ENCODE measurements at regions of chr1 and their contacts with region 1.

Region 1: GRCh38 chr1:24744911-24745710 is at the start of gene CLIC4:
- DNase-seq: peak; percentile 100
- ATAC-seq: peak; percentile 97
- H3K4me3 ChIP-seq: peak within 1 kb of the TSS; percentile 82 to 98
- H3K27ac ChIP-seq: peak within 1 kb of the TSS; percentile 81 to 97
- H3K4me1 ChIP-seq: peaks cover 0 to 3% of the 10 kb centered on the region in 2 donors
- H3K27me3 ChIP-seq: no peaks in the 10 kb centered on the region
- total RNA-seq, gene CLIC4: 477 to 941 TPM

Region 2: DNA sequence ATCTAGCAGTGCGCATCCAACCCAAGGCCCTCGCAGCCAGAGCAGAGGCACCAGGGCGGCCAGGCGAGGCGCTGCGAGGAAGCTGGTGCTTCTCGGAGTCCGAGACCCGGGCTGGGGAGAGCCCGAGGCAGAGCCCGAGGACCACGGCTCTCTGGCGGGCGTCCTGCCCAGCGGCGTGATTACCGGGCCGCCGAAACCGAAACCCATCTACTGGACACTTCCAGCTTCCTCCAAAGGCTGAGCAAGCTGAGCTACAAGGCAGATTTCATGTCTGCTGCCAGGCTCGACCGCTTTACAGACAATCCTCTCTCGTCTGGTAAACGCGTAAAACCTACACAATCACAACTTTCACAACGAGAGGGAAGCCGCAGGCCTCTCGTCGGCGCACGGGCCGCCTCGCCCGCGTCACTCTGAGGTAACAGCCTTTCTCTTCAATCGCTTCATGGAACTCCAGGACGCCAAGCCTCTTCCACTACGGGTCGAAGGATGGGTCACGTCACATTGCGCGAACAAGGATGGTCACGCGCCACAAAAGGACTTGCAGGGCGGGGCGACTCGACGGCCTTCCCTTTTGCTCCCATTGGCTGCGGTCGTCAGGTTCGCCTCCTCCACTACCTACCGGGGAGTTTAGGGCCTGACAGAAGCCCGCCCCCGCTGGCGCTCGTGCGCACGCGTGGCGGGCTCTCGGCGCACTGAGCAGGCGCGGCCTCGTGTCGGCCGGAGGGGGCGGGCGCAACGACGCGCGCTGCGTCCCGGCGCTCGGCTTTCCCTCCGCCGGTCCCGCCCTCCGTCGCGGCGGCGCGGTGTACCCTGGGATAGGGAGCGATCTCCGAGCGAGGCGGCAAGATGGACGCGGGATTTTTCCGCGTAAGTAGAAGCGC is 102.4 kb before region 1 on chr1 and contains the start of gene SRRM1:
- intact Hi-C with region 1: loop called in 1 of 2 experiments (anchors 1 kb)
- DNase-seq: peak; percentile 99 to 100
- ATAC-seq: peak; percentile 98
- H3K4me3 ChIP-seq: peak within 1 kb of the TSS; percentile 86 to 88
- H3K27ac ChIP-seq: peak within 1 kb of the TSS; percentile 85 to 96
- H3K4me1 ChIP-seq: no peaks in the 10 kb centered on the region
- H3K27me3 ChIP-seq: no peaks in the 10 kb centered on the region
- total RNA-seq, gene SRRM1: 111 to 113 TPM

Region 3: GRCh38 chr1:24688621-24689195 is 56.4 kb before region 1 on chr1:
- intact Hi-C with region 1: loop called (anchors 2 to 5 kb)
- DNase-seq: peak; percentile 84 to 87
- ATAC-seq: peak; percentile 86
- H3K4me3 ChIP-seq: no peak overlapping the region
- H3K27ac ChIP-seq: no peak overlapping the region
- H3K4me1 ChIP-seq: no peaks in the 10 kb centered on the region
- H3K27me3 ChIP-seq: no peaks in the 10 kb centered on the region

Region 4: DNA sequence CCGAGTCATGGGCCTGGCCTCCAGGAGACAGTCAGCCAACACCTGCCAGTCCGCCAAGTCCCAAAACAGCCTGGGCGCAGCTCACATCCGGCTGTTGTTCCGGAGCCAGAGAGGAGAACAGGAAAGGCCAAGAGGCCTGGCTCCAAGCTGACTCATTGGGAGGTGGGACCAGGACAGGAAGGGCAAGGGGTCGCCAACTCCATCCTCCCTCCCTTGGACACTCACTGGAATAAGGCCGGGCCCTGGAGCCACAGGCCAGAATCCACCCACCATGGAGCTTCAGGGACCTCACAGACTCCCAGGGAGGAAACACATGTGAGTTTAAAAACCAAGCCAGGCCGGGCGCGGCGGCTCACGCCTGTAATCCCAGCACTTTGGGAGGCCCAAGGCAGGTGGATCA is 25.0 kb before region 1 on chr1:
- intact Hi-C with region 1: loop called in 1 of 2 experiments (anchors 1 kb)
- DNase-seq: peak; percentile 94 to 95
- ATAC-seq: peak; percentile 91
- H3K4me3 ChIP-seq: no peak overlapping the region
- H3K27ac ChIP-seq: peak overlapping the region in 1 of 2 donors; percentile 58
- H3K4me1 ChIP-seq: no peaks in the 10 kb centered on the region
- H3K27me3 ChIP-seq: no peaks in the 10 kb centered on the region

Region 5: DNA sequence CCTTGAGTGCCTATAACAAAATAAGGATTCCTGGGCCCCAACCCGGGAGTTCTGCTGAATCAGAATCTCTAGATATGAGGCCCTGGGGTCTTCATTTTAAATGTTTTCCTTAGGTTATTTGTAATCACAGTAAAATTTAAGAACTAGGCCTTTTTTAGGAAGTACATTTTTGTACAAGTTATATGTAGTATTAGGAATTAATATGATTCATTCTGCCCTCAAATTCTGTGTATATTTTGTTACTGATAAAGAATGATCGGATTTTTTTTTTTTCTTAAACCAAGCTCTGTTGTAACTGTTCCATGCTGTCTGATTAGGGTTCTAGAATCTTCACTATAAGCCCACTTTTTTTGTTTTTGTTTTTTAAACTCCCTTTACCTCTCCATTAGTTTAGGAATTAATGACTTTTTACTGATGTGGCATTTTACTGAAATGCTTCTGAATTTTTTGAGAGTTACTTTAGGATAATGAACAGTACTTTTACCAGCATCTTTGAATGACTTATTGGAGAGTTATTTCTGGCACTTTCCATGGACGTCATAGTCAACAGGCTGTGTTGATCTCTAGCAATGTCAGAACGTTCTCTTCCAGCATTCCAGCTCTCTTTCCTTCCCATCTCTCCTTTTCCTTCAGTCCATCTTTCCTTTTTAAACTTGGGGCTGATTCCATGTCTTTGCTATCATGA is 48.5 kb after region 1 on chr1:
- intact Hi-C with region 1: loop called in 1 of 2 experiments (anchors 2 kb)
- DNase-seq: no peak
- ATAC-seq: peak; percentile 71
- H3K4me3 ChIP-seq: no peak overlapping the region
- H3K27ac ChIP-seq: peak overlapping the region; percentile 36 to 59
- H3K4me1 ChIP-seq: peaks cover 3 to 11% of the 10 kb centered on the region in 2 donors
- H3K27me3 ChIP-seq: no peaks in the 10 kb centered on the region

Region 6: GRCh38 chr1:24830680-24831272 is 85.7 kb after region 1 on chr1:
- intact Hi-C with region 1: loop called (anchors 5 kb)
- DNase-seq: no peak
- ATAC-seq: peak; percentile 76
- H3K4me3 ChIP-seq: no peak overlapping the region
- H3K27ac ChIP-seq: no peak overlapping the region
- H3K4me1 ChIP-seq: peaks cover 3 to 12% of the 10 kb centered on the region in 2 donors
- H3K27me3 ChIP-seq: no peaks in the 10 kb centered on the region

Region 7: DNA sequence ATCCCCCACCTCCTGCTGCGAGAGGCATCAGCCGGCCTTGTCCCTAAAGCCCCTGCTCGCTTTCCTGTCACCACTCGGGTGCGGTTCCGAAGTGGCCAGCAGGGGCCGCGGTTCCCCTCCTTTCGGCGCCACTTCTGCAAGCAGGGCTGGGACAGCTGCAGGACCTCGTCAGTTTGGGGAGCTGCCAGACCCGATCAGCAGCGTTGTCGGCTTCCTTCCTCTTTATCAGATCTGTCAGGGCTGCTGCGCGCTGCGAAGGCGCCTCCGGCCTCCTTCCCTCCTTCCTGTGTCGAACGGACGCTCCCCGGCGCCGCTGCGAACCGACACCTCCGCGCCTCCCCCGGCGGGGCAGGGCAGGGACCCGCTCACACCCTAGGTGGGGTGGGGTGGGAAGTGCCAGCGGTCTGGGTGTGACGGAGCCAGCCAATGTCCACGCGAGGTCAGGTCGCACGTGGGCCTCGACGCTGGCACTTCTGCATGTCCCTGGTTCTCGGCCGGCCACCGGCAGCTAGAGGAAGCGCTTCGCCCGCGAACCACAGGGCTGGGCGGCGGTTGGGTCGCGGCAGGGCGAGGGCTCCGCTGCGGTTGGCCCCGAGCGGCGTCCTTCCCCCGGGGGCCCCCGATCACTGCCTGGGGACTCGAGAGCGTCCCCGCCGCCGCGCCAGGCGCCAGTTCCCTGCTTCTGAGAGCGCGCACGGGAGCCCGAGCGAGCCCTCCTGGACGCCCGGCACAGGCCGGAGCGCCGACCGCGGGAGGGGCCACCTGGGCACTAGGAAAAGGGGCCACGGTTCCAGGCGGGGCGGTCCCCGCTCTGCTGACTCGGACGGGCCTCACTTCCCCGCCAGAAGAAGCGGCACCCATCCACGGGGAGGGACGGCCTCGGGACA is 103.1 kb after region 1 on chr1:
- intact Hi-C with region 1: no loop called
- DNase-seq: peak; percentile 95 to 96
- ATAC-seq: peak; percentile 95
- H3K4me3 ChIP-seq: peak overlapping the region; percentile 9 to 14
- H3K27ac ChIP-seq: no peak overlapping the region
- H3K4me1 ChIP-seq: no peaks in the 10 kb centered on the region
- H3K27me3 ChIP-seq: no peaks in the 10 kb centered on the region